Gastrocnemius medialis (tissue), 4 donors: ENCODE measurements at regions of chr2 and their contacts with region 1.

Region 1: DNA sequence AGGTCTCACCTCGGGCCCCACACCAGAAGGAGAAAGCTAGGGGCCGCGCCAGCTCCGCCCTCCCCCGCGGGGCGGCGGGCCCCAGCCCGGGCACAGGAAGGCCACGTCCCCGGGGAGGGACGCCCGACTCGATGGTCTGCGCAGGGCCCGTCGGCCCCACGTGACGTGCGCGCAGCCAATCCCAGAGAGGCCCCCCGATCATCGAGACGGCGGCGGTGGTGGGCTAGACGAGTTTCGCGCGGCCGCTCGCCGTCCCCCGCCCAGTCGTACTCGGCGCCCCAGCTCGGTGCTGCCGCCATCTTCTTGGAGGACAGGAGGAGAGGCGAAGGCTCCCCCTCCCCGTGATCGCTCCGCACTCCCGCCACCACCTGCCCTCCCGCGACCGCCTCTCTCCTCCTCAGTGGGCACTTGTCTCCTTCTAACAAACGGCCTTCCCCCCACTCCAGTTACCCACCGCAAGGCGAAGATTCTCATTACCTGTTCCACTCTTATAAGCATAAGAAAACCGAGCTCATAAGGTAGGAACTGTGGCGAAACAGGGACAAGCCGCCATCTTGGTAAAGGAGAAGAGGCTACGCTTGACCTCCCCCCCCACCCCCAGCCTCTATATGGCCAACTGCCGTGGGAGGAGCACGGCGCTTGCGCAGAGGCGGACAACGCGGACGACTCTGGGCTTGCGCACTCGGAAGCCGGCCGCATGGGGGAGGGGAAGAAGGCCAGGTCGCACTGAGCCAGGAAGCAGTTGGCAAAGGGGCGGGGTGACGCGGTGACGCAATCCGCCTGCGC is at the start of gene HDLBP:
- DNase-seq: peak; percentile 98 to 99
- ATAC-seq: peak; percentile 80 to 87
- H3K4me3 ChIP-seq: peak within 1 kb of the TSS; percentile 67 to 92 (median 83)
- H3K27ac ChIP-seq: peak within 1 kb of the TSS; percentile 97 to 99 (median 98)
- H3K4me1 ChIP-seq: peaks cover 66 to 73% of the 10 kb centered on the region in 2 donors
- H3K27me3 ChIP-seq: no peaks in the 10 kb centered on the region
- CTCF ChIP-seq: peak in 2 of 5 experiments; percentile 15 to 16
- POLR2A ChIP-seq: peak; percentile 90 to 93
- total RNA-seq, gene HDLBP: 383 to 486 (median 444) TPM

Region 2: GRCh38 chr2:240250985-240251847 is 1064.1 kb before region 1 on chr2:
- in situ Hi-C with region 1: no loop called
- intact Hi-C with region 1: loop called (anchors 5 kb)
- DNase-seq: peak; percentile 91 to 97
- ATAC-seq: peak; percentile 79 to 82
- H3K4me3 ChIP-seq: peak overlapping the region; percentile 15 to 41 (median 32)
- H3K27ac ChIP-seq: peak overlapping the region; percentile 93 to 96 (median 95)
- H3K4me1 ChIP-seq: peaks cover 43 to 47% of the 10 kb centered on the region in 2 donors
- H3K27me3 ChIP-seq: no peaks in the 10 kb centered on the region
- CTCF ChIP-seq: no peak
- POLR2A ChIP-seq: peak; percentile 85

Region 3: GRCh38 chr2:241161646-241162281 is 153.5 kb before region 1 on chr2:
- in situ Hi-C with region 1: no loop called
- intact Hi-C with region 1: loop called (anchors 5 kb)
- DNase-seq: peak; percentile 95 to 99
- ATAC-seq: peak; percentile 93 to 94
- H3K4me3 ChIP-seq: no peak overlapping the region
- H3K27ac ChIP-seq: peak overlapping the region; percentile 82 to 92 (median 91)
- H3K4me1 ChIP-seq: peaks cover 21 to 22% of the 10 kb centered on the region in 2 donors
- H3K27me3 ChIP-seq: no peaks in the 10 kb centered on the region
- CTCF ChIP-seq: peak in 1 of 5 experiments; percentile 35
- POLR2A ChIP-seq: peak in 1 of 2 donors; percentile 23

Region 4: DNA sequence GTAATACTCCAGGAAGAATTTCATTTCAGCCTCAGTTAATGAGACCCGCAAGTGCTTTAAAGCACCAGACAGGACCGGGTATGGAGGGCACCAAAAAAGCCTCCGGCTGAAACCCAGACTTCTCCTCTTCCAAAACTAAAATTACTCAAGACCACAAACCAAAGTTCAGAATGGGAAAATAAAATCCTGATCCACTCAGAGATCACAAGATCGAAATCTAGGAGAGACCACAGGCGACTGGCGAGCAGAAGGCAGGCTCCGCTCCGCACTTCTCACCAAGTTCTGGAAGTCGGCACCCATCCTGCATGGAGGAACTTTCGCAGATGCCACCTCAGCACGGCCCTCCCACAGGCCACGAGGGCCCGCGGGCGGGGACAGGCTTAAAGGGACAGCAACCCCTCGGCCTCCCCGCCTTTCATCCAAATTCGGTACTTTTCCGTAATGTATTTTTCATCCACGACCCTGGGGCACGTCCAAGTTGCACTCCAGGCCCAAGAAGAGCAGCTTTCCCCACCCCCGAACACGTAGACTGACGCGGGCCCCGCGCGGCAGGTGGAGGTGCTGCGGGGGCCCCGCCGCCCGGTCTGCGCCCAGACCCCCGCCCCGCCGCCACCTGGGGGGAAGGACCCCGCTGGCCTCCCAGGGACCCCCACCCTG is 43.5 kb before region 1 on chr2:
- in situ Hi-C with region 1: no loop called
- intact Hi-C with region 1: loop called (anchors 2 kb)
- DNase-seq: peak; percentile 80 to 81
- ATAC-seq: peak; percentile 88 to 90
- H3K4me3 ChIP-seq: peak overlapping the region; percentile 67 to 93 (median 73)
- H3K27ac ChIP-seq: peak overlapping the region; percentile 83 to 97 (median 92)
- H3K4me1 ChIP-seq: peaks cover 42 to 43% of the 10 kb centered on the region in 2 donors
- H3K27me3 ChIP-seq: no peaks in the 10 kb centered on the region
- CTCF ChIP-seq: no peak
- POLR2A ChIP-seq: peak in 1 of 2 donors; percentile 46

Region 5: GRCh38 chr2:241355983-241356870 is 40.9 kb after region 1 on chr2 and contains the start of gene FARP2:
- in situ Hi-C with region 1: no loop called
- intact Hi-C with region 1: loop called (anchors 1 kb)
- DNase-seq: peak; percentile 99
- ATAC-seq: peak; percentile 92 to 96
- H3K4me3 ChIP-seq: peak within 1 kb of the TSS; percentile 70 to 85 (median 82)
- H3K27ac ChIP-seq: peak within 1 kb of the TSS; percentile 80 to 95 (median 92)
- H3K4me1 ChIP-seq: peaks cover 23 to 30% of the 10 kb centered on the region in 2 donors
- H3K27me3 ChIP-seq: no peaks in the 10 kb centered on the region
- CTCF ChIP-seq: no peak
- POLR2A ChIP-seq: peak; percentile 87 to 88
- total RNA-seq, gene FARP2: 10.7 to 20.1 (median 13.6) TPM

Region 6: DNA sequence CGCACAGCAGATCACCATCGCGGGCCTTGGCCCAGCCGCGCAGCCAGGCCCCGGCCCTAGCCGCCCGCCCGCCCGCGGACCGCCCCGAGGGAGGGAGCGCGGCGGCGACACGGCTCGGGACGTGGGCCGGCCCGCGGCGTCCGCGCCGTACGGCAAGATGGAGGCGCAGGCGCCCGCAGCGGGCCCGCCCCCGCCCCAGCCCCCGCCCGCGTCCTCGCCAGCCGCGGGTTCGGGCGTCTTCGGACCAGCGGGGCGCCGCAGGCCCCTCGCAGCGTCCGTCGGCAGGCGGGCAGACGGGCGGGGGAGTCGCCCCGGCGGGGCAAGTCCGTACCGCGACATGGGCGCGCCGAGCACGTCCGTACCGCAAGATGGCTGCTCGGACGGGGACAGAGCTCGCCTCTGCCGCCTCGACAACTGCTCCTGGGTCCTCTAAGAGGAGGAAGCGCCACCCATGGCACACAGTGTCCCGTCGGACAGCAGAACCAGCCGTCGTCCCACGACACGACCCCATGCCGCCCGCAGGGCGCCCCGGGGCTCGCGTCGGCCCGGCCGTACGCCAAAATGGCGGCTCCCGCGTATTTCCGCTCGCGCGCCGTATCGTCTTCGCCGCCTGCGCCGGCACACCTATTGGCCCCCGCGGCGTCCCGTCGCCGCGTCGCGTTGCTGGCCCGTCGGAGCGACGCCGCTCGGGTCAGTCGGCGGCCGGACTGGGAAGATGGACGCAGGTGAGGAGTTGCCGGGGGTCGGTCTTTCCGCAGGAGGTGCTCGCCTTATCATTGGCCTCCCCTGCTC is 321.9 kb after region 1 on chr2 and contains the starts of genes ATG4B and THAP4:
- in situ Hi-C with region 1: no loop called
- intact Hi-C with region 1: loop called (anchors 1 kb)
- DNase-seq: peak; percentile 70 to 81
- ATAC-seq: peak; percentile 90 to 91
- H3K4me3 ChIP-seq: peak within 1 kb of the TSS; percentile 73 to 95 (median 92)
- H3K27ac ChIP-seq: peak within 1 kb of the TSS; percentile 92 to 100 (median 98)
- H3K4me1 ChIP-seq: peaks cover 36 to 49% of the 10 kb centered on the region in 2 donors
- H3K27me3 ChIP-seq: no peaks in the 10 kb centered on the region
- CTCF ChIP-seq: peak in 1 of 5 experiments; percentile 51
- POLR2A ChIP-seq: peak; percentile 65 to 74
- total RNA-seq, gene ATG4B: 32.0 to 57.5 (median 49.8) TPM
- total RNA-seq, gene THAP4: 71.3 to 83.3 (median 79.9) TPM

Region 7: GRCh38 chr2:241702132-241703031 is 387.1 kb after region 1 on chr2:
- in situ Hi-C with region 1: no loop called
- intact Hi-C with region 1: loop called (anchors 1 kb)
- DNase-seq: peak; percentile 78 to 81
- ATAC-seq: peak; percentile 83 to 85
- H3K4me3 ChIP-seq: peak overlapping the region; percentile 57 to 97 (median 82)
- H3K27ac ChIP-seq: peak overlapping the region; percentile 89 to 97 (median 94)
- H3K4me1 ChIP-seq: peaks cover 6 to 16% of the 10 kb centered on the region in 2 donors
- H3K27me3 ChIP-seq: no peaks in the 10 kb centered on the region
- CTCF ChIP-seq: peak in 4 of 5 experiments; percentile 28 to 36 (median 34)
- POLR2A ChIP-seq: no peak